ENCODE measurements at regions of chr6 and their contacts with region 1.

Region 1: DNA sequence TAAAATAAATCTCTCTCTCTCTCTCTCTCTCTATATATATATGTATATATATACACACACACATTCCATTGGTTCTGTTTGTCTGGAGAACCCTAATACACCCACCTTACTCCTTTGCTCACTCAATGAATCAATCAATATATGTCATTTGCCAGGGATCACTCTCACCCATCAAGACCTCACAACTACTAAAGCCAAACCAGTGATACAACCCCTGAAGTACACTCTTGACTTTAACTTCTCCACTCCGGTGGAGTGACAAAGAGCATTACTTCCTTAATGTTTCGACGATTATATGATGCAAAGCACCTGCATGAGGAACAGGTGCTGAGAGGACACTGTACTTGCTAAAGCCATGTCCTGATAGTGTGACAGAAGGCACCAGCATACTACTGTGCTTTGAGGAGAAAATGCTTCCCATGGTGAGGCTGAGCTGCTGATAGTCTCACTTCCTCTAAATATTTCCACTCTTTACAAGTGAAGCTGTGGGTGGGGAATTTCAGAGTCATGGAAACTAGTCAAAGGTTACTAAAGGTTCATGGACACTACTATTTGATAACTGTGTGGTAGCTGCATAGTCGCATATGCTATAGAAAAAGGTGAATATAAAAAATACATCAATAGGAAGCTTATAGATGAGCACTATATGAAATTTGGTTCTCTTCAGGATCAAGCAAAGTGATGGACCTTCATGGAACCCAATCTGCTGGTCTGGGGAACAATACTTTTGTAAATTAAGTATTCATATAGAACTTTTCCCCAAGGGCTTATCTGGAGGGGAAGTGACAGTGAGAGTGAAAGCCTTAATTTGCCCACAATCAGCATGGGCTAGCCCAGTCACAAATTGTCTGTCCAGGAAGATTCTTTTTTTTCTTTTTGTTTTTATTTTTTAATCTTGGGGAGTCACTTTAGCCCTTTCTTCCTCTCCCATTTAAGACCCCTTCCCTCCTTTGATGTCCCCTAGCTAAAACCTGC is 141.9 kb upstream of the NEDD9 start:
- DNase-seq: no peak
- H3K4me3 ChIP-seq: no peak overlapping the region
- H3K27ac ChIP-seq: no peak overlapping the region
- H3K4me1 ChIP-seq: no peaks in the 10 kb centered on the region
- H3K27me3 ChIP-seq: no peaks in the 10 kb centered on the region
- CTCF ChIP-seq: no peak
- POLR2A ChIP-seq: no peak

Region 2: GRCh38 chr6:11330413-11330760 is 43.9 kb before region 1 on chr6:
- intact Hi-C with region 1: no loop called
- DNase-seq: peak; percentile 20
- H3K4me3 ChIP-seq: no peak overlapping the region
- H3K27ac ChIP-seq: no peak overlapping the region
- H3K4me1 ChIP-seq: no peaks in the 10 kb centered on the region
- H3K27me3 ChIP-seq: no peaks in the 10 kb centered on the region
- CTCF ChIP-seq: no peak
- POLR2A ChIP-seq: no peak

Region 3: GRCh38 chr6:11414176-11414963 is 40.0 kb after region 1 on chr6:
- intact Hi-C with region 1: no loop called
- DNase-seq: peak; percentile 43
- H3K4me3 ChIP-seq: no peak overlapping the region
- H3K27ac ChIP-seq: no peak overlapping the region
- H3K4me1 ChIP-seq: no peaks in the 10 kb centered on the region
- H3K27me3 ChIP-seq: no peaks in the 10 kb centered on the region
- CTCF ChIP-seq: no peak
- POLR2A ChIP-seq: peak; percentile 18

Region 4: GRCh38 chr6:11434565-11435326 is 60.4 kb after region 1 on chr6:
- intact Hi-C with region 1: loop called (anchors 5 kb)
- DNase-seq: peak; percentile 64
- H3K4me3 ChIP-seq: no peak overlapping the region
- H3K27ac ChIP-seq: peak overlapping the region; percentile 31 to 64
- H3K4me1 ChIP-seq: no peaks in the 10 kb centered on the region
- H3K27me3 ChIP-seq: no peaks in the 10 kb centered on the region
- CTCF ChIP-seq: peak in 1 of 4 experiments; percentile 1
- POLR2A ChIP-seq: no peak